Activated CD8-positive, alpha-beta T cell treated with anti-CD3 and anti-CD28 coated beads for 36 hours (primary cell): ENCODE measurements at regions of chr19 and their contacts with region 1.

Region 1: DNA sequence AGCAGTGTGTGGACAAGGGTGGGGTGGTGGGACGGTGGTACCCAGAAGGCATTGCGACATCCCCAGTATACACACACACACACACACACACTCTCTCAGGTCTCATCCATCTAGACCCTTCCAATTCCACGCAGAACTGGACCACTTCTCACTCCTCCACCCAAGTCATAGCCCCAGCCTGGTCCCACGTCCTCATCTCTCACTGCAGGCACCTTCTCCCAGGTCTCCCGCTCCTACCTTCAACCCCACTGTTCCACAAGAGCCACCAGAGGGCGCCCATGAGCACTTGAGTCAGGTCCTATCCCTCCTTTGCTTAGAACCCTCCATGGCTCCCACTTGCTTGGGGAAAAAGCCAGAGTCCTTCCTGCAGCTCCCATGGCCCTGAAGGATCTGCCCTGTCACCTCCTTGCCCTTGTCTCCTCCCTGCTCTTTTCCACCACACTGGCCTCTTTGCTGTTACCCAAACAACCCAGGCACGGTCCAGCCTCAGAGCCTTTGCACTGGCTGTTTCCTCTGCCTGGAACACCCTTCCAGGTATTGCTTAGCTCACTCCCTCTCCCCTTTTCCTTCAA is 62.6 kb downstream of the IER2 start:
- DNase-seq: peak; percentile 86
- ATAC-seq: peak; percentile 38
- H3K4me3 Mint-ChIP-seq: no peak overlapping the region
- H3K27ac Mint-ChIP-seq: no peak overlapping the region
- H3K4me1 Mint-ChIP-seq: peaks cover 36% of the 10 kb centered on the region
- H3K27me3 Mint-ChIP-seq: no peaks in the 10 kb centered on the region
- CTCF ChIP-seq: peak; percentile 73

Region 2: GRCh38 chr19:13132471-13133180 is 80.2 kb before region 1 on chr19:
- CTCF ChIA-PET with region 1: no interaction called
- POLR2A ChIA-PET with region 1: no interaction called
- intact Hi-C with region 1: no loop called
- DNase-seq: peak; percentile 79
- ATAC-seq: peak; percentile 96
- H3K4me3 Mint-ChIP-seq: peak overlapping the region; percentile 14
- H3K27ac Mint-ChIP-seq: peak overlapping the region; percentile 84
- H3K4me1 Mint-ChIP-seq: peaks cover 41% of the 10 kb centered on the region
- H3K27me3 Mint-ChIP-seq: no peaks in the 10 kb centered on the region
- CTCF ChIP-seq: no peak

Region 3: DNA sequence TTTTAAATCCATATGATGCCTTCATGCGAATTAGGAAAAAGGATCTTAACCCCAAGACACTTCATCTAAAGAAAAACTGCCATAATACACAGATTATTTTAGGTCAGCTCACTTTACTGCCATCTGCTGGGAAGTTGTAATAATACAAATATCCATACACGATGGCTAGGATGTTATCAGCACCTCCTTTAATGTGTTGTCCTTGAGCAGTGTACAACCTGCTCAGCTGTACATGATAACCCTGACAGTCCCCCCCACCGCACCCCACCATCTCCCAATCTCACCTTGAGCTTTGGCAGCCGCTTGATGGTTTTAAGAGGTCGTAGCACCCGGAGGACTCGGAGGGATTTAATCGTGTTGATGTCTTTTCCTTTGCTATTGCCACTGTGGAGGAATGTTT is 49.6 kb after region 1 on chr19:
- CTCF ChIA-PET with region 1: interaction called, 10 read pairs
- POLR2A ChIA-PET with region 1: no interaction called
- intact Hi-C with region 1: no loop called
- DNase-seq: no peak
- ATAC-seq: peak; percentile 63
- H3K4me3 Mint-ChIP-seq: no peak overlapping the region
- H3K27ac Mint-ChIP-seq: no peak overlapping the region
- H3K4me1 Mint-ChIP-seq: peaks cover 16% of the 10 kb centered on the region
- H3K27me3 Mint-ChIP-seq: peaks cover 11% of the 10 kb centered on the region
- CTCF ChIP-seq: peak; percentile 81